Activated naive CD4-positive, alpha-beta T cell treated with anti-CD3 and anti-CD28 coated beads for 36 hours (primary cell): ENCODE measurements at regions of chr2 and their contacts with region 1.

Region 1: DNA sequence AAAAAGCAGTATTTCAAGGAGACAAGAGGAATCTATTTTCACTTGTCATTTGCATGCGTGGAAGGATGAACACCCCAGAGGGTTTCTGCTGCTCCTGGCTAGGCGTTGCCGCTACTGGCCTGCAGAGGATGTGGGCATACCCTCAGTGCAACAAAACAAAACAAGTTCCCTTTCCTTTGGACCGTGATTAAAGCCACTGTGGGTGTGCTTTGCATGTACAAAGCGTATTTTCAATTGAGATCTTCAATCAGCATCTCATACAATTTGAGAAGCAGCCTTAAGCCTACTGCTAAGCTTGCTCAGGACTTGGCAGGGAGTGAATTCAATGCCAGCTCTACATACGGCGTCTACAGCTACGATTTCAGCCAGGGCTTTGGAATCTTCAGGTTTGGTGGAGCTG is 298.4 kb downstream of the LPIN1 start:
- DNase-seq: peak; percentile 17
- H3K4me3 Mint-ChIP-seq: no peak overlapping the region
- H3K27ac Mint-ChIP-seq: no peak overlapping the region
- H3K4me1 Mint-ChIP-seq: peaks cover 53% of the 10 kb centered on the region
- H3K27me3 Mint-ChIP-seq: no peaks in the 10 kb centered on the region

Region 2: DNA sequence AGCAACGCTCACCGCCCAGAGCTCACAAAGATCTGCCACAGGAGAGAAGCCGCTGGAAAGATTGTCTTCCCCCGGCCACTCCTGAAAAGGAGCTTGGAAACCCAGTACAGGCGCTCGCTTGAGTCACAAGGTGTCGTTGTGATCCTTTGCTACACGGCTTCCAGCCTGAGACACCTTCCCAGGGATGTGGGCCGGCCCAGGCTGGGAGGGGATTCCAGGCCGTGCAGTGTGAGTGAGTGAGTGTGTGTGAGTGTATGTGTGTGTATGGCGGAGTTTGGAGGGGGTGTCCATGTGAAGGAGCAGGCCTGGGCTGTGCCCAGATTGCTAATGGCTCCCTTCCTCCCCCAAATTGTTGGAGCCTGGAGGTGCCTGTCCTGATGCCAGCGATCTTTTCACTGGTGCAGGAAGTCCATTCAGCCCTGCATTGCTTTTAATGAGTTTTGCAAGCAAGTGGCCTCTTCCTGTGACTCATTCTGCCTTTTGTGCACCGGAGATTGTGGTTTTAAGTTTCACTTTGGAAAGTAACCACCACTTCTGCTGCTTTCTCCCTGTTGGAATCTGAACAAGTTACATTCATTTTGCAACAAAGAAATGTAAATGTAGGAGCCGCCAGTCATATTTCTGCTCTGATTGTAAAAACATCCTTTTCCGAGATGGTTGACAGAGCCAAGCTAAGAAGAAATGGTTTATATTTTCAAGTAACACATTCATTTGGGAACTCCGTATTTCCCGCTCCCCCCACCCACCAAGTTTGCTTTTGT is 214.7 kb before region 1 on chr2:
- CTCF ChIA-PET with region 1: no interaction called
- intact Hi-C with region 1: no loop called
- DNase-seq: peak; percentile 80
- H3K4me3 Mint-ChIP-seq: peak overlapping the region; percentile 1
- H3K27ac Mint-ChIP-seq: peak overlapping the region; percentile 10
- H3K4me1 Mint-ChIP-seq: peaks cover 42% of the 10 kb centered on the region
- H3K27me3 Mint-ChIP-seq: no peaks in the 10 kb centered on the region

Region 3: DNA sequence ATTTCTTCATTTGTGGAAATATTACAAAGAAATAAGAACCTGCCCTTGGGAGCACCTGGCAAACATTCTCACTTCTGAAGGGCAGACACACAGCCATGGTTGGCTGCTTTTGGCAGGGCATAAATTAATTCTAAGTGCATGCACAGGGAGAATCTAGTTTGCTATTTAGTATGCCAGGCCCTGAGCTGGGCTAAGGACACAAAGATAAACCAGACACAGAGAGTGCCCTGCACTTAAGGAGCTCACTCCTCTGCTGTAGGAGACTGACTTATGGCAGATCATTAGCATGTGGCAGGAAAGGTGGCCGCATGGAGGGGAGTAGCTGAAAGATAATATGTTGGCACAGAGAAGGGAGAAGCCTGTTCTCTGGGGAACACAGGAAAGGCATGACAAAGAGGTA is 68.6 kb after region 1 on chr2:
- CTCF ChIA-PET with region 1: no interaction called
- intact Hi-C with region 1: loop called (anchors 2 kb)
- DNase-seq: no peak
- H3K4me3 Mint-ChIP-seq: no peak overlapping the region
- H3K27ac Mint-ChIP-seq: no peak overlapping the region
- H3K4me1 Mint-ChIP-seq: peaks cover 24% of the 10 kb centered on the region
- H3K27me3 Mint-ChIP-seq: no peaks in the 10 kb centered on the region